H1 (cell line): ENCODE measurements at regions of chr20 and their contacts with region 1.

Region 1: DNA sequence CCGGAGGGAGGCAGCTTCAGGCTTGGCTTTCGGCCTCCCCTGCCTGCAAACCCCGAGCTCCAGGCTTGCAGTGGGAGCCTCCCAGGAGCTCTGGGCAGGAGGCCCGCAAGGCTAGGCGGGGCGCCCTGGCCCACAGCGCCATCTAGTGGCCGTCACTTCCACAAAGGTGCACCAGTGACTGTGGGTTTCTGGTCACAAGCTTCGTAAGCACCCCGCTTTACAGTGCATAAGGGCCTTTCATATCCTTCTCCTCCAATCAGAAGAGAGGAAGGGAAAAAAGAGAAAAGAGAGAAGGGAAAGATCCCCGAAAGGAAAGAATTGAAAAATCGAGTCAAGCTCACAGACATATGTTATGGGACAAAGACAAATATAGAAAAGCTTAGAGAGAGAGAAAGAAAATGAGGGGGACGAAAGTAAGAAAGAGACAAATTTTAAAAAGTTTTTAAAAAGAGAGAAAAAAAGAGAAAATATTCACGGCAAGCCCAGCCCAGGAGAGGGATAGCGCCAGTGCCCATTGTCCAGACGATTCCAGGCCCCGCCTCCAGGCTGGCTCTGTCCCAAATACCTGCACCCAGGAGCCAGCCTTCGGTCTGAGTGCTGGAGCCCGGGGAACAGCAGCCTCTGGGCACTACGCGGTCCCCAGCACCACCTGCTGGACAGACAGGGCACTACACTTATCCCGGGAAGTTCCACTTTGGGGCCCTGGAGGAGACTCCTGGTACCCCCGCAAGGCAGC is 207.1 kb downstream of the PREX1 start:
- DNase-seq: peak; percentile 84 to 98
- H3K4me3 ChIP-seq: peak overlapping the region in 3 of 4 experiments; percentile 28 to 59 (median 36); a peak in 4 of 8 replicates
- H3K27ac ChIP-seq: no peak overlapping the region
- H3K4me1 ChIP-seq: peaks cover 0 to 5% (median 2%) of the 10 kb centered on the region in 4 experiments; a peak in 3 of 7 replicates
- H3K27me3 ChIP-seq: no peaks in the 10 kb centered on the region
- CTCF ChIP-seq: peak; percentile 93 to 98 (median 96)
- EP300 ChIP-seq: peak in 1 of 2 experiments; percentile 17; a peak in 1 of 3 replicates
- POLR2A ChIP-seq: no peak
- RAD21 ChIP-seq: peak; percentile 99

Region 2: GRCh38 chr20:47785854-47786764 is 834.6 kb before region 1 on chr20:
- CTCF ChIA-PET with region 1: interaction called, 11 read pairs
- POLR2A ChIA-PET with region 1: no interaction called
- DNase-seq: peak in 1 of 2 experiments; percentile 75
- H3K4me3 ChIP-seq: peak overlapping the region; percentile 47 to 74 (median 66)
- H3K27ac ChIP-seq: no peak overlapping the region
- H3K4me1 ChIP-seq: peaks cover 0 to 6% (median 3%) of the 10 kb centered on the region in 4 experiments; a peak in 5 of 7 replicates
- H3K27me3 ChIP-seq: peaks cover 2 to 39% (median 28%) of the 10 kb centered on the region in 4 experiments
- CTCF ChIP-seq: peak; percentile 61 to 69 (median 68)
- EP300 ChIP-seq: no peak; a peak in 1 of 3 replicates
- POLR2A ChIP-seq: no peak
- RAD21 ChIP-seq: peak; percentile 85 to 90

Region 3: DNA sequence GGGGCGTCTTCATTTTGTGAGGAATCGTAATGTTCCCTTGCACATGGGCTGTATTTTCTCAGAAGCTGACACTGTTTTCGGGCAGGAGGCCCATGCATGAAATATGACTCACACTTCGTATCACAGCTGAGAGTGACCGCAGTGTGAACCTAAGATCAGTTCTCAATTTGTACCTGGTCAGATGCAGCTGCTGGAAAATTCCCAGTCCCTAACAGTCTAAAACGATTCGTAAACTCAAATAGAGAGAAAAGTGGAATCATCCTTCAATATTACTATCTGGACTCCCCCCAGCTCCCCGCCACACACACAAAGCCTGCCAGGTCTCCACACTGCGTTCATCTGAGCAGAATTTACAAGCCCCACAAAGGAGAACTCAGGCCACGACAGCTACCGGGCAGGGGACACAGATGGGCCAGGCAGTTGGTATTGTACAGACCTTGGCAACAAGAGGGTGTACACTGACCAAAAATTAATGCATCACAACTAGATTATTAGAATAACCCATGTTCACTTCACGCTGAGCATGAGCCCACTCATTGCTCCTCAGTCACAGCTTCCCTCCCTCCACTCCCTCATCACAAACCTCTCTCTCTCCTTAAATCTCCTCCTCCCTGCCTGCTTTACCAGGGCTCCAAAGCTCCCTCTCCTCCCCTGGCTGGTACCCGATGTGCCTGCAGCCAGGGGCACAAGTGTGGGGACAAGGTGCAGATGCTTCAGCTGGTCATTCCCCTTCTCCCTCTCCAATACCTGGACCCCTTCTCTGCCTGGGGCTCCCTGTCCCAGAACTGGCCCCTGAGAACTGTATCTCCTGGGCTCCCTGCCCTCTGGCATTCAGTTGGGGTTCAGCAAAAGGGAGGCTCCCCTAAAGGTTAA is 281.3 kb before region 1 on chr20:
- CTCF ChIA-PET with region 1: interaction called, 10 read pairs
- POLR2A ChIA-PET with region 1: no interaction called
- DNase-seq: no peak
- H3K4me3 ChIP-seq: no peak overlapping the region
- H3K27ac ChIP-seq: no peak overlapping the region
- H3K4me1 ChIP-seq: peaks cover 0 to 8% (median 0%) of the 10 kb centered on the region in 4 experiments; a peak in 1 of 7 replicates
- H3K27me3 ChIP-seq: no peaks in the 10 kb centered on the region
- CTCF ChIP-seq: no peak
- EP300 ChIP-seq: no peak
- POLR2A ChIP-seq: no peak
- RAD21 ChIP-seq: no peak

Region 4: GRCh38 chr20:48405669-48406308 is 214.9 kb before region 1 on chr20:
- CTCF ChIA-PET with region 1: interaction called, 24 read pairs
- POLR2A ChIA-PET with region 1: no interaction called
- DNase-seq: peak in 1 of 2 experiments; percentile 68
- H3K4me3 ChIP-seq: no peak overlapping the region
- H3K27ac ChIP-seq: no peak overlapping the region
- H3K4me1 ChIP-seq: peaks cover 2 to 9% (median 6%) of the 10 kb centered on the region in 4 experiments; a peak in 5 of 7 replicates
- H3K27me3 ChIP-seq: no peaks in the 10 kb centered on the region; a peak in 1 of 7 replicates
- CTCF ChIP-seq: peak; percentile 43 to 70 (median 68); a peak in 3 of 4 replicates
- EP300 ChIP-seq: no peak
- POLR2A ChIP-seq: no peak
- RAD21 ChIP-seq: peak; percentile 53 to 67

Region 5: DNA sequence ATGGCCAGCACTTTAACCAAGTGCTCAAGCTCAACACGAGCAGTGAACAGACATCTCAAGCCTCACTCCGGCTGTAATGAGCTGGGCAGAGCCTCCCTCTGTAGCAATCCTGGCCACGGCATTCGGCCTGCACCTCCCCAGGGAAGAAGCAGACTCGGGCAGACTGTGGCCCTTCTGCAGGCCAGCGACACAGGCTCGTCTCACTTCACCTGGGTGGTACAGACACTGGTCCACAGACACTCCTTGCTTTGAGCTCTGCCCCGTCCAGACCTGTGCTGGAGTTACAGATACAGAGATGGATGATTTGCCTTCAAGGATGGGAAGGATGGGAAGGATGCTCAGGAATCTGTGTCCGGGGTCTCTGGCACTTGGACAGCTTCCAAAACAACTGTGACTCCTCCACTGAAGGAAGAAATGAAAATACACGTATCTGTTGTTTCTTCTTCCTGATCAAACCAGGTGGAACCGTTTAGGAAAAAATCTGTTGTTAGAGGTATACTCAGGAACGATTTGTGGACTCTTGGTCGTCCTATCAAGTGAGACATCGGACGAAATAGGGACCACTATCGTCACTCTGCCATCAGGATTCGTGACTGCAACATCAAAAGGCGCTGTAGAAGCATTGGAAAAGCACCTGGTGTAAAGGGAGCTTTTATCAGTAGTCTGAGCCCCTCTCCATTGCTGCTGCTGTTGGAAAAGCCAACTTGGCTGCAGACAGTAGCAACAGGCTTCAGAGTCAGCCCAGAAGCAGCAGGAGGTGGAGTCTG is 93.6 kb before region 1 on chr20:
- CTCF ChIA-PET with region 1: interaction called, 11 read pairs
- POLR2A ChIA-PET with region 1: no interaction called
- DNase-seq: peak in 1 of 2 experiments; percentile 14
- H3K4me3 ChIP-seq: no peak overlapping the region
- H3K27ac ChIP-seq: no peak overlapping the region
- H3K4me1 ChIP-seq: no peaks in the 10 kb centered on the region
- H3K27me3 ChIP-seq: no peaks in the 10 kb centered on the region; a peak in 1 of 7 replicates
- CTCF ChIP-seq: no peak
- EP300 ChIP-seq: no peak
- POLR2A ChIP-seq: no peak
- RAD21 ChIP-seq: no peak

Region 6: DNA sequence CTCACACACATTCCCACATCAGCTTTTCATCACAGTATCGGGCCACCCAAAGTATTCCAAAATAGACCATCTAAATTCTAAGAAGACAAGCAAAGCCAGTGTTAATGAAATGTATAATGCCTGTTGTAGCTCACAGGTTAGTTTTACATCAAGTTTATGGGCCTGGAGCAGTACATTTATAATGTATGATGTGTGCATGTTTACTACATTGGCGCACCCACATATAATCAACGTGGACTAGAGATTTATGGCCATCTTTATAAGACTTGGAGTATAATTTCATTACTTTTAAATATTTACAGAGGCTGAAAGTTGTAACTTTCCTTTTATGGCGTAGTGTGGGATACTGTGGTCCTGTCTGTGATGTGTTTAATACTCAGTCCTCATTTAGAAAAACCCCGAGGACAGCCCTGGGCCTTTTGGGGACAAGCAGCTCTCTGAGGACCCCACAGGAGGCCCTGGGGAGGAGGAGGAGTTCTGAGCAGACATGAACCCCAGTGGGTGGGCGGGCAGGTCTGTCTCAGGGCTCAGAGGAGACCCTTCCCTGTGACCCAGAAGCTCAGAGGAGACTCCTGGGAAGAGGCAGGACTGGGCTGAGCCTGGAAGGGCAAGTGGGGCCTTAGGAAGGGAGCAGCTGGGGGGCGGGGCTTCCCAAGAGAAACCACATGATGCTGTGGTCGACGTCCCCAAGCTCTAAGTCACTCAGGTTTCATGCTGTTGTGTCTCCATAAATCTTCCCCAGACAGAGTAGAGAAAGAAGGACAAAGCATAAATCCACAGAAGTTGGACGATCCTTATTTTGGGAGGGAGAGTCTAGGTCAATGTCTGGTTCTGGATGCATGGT is 25.0 kb before region 1 on chr20:
- CTCF ChIA-PET with region 1: interaction called, 10 read pairs
- POLR2A ChIA-PET with region 1: no interaction called
- DNase-seq: no peak
- H3K4me3 ChIP-seq: no peak overlapping the region
- H3K27ac ChIP-seq: no peak overlapping the region
- H3K4me1 ChIP-seq: peaks cover 0 to 3% (median 0%) of the 10 kb centered on the region in 4 experiments; a peak in 1 of 7 replicates
- H3K27me3 ChIP-seq: no peaks in the 10 kb centered on the region
- CTCF ChIP-seq: no peak
- EP300 ChIP-seq: no peak
- POLR2A ChIP-seq: no peak
- RAD21 ChIP-seq: no peak